MCF 10A (cell line): ENCODE measurements at regions of chr2 and their contacts with region 1.

Region 1: GRCh38 chr2:227106845-227107759 is 56.9 kb downstream of the COL4A4 start:
- DNase-seq: peak; percentile 81
- H3K4me3 Mint-ChIP-seq: no peak overlapping the region
- H3K27ac Mint-ChIP-seq: no peak overlapping the region
- H3K4me1 Mint-ChIP-seq: peaks cover 4% of the 10 kb centered on the region
- H3K27me3 Mint-ChIP-seq: no peaks in the 10 kb centered on the region
- CTCF ChIP-seq: peak; percentile 85

Region 2: GRCh38 chr2:225668606-225669266 is 1438.4 kb before region 1 on chr2:
- CTCF ChIA-PET with region 1: interaction called, 6 read pairs
- POLR2A ChIA-PET with region 1: no interaction called
- intact Hi-C with region 1: loop called (anchors 1 kb)
- DNase-seq: peak; percentile 77
- H3K4me3 Mint-ChIP-seq: no peak overlapping the region
- H3K27ac Mint-ChIP-seq: no peak overlapping the region
- H3K4me1 Mint-ChIP-seq: peaks cover 5% of the 10 kb centered on the region
- H3K27me3 Mint-ChIP-seq: no peaks in the 10 kb centered on the region
- CTCF ChIP-seq: peak; percentile 74

Region 3: GRCh38 chr2:226813148-226813701 is 293.9 kb before region 1 on chr2:
- CTCF ChIA-PET with region 1: no interaction called
- POLR2A ChIA-PET with region 1: no interaction called
- intact Hi-C with region 1: loop called (anchors 1 kb)
- DNase-seq: no peak
- H3K4me3 Mint-ChIP-seq: no peak overlapping the region
- H3K27ac Mint-ChIP-seq: no peak overlapping the region
- H3K4me1 Mint-ChIP-seq: no peaks in the 10 kb centered on the region
- H3K27me3 Mint-ChIP-seq: peaks cover 27% of the 10 kb centered on the region
- CTCF ChIP-seq: peak; percentile 32

Region 4: DNA sequence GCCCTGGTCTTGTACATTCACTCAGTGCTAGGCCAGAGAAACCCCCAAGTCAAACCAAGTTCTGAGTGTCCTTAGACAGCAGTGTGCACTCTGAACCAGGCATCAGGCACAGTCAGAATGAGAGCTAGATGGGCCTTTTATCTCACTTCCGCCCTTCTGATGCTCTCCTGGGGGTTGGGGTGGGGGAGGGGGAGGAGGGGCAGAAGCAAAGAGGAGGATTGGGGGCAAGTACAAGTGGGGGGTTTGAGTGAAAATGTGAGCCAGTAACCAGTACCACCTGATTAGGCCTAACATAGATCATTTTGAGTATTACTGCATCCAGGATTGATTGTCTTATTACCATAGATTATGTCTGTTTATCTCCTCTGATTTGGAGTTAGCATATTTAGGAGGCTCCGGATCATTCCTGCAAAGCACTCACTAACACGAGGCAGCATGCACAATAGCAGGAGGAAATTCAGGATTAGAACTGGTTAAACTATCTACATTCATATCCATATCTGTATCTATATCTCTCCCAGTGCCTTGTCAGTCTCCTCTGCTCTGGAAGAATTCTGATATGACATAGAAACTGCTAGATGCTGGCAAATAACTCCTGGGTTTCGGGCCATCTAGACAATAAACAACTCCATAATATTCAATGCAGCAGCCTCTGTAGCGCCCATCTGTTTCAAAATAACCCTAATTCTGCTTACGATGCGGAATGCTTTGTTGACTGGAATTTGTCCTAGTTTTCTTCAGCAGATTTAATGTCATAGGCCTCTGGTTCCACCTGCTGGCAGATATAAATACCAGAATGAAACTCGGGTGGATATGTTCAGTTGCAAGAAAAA is 122.1 kb before region 1 on chr2:
- CTCF ChIA-PET with region 1: no interaction called
- POLR2A ChIA-PET with region 1: no interaction called
- intact Hi-C with region 1: loop called (anchors 5 kb)
- DNase-seq: peak; percentile 61
- H3K4me3 Mint-ChIP-seq: no peak overlapping the region
- H3K27ac Mint-ChIP-seq: no peak overlapping the region
- H3K4me1 Mint-ChIP-seq: peaks cover 15% of the 10 kb centered on the region
- H3K27me3 Mint-ChIP-seq: no peaks in the 10 kb centered on the region
- CTCF ChIP-seq: peak; percentile 61

Region 5: GRCh38 chr2:227033471-227034148 is 73.5 kb before region 1 on chr2:
- CTCF ChIA-PET with region 1: no interaction called
- POLR2A ChIA-PET with region 1: no interaction called
- intact Hi-C with region 1: loop called (anchors 10 kb)
- DNase-seq: peak; percentile 22
- H3K4me3 Mint-ChIP-seq: no peak overlapping the region
- H3K27ac Mint-ChIP-seq: no peak overlapping the region
- H3K4me1 Mint-ChIP-seq: no peaks in the 10 kb centered on the region
- H3K27me3 Mint-ChIP-seq: peaks cover 12% of the 10 kb centered on the region
- CTCF ChIP-seq: peak; percentile 33